Activated CD4-positive, alpha-beta memory T cell treated with anti-CD3 and anti-CD28 coated beads for 36 hours (primary cell): ENCODE measurements at regions of chr11 and their contacts with region 1.

Region 1: GRCh38 chr11:95231127-95231880 is at the start of gene SESN3:
- DNase-seq: peak; percentile 99
- H3K4me3 Mint-ChIP-seq: no peak within 1 kb of the TSS
- H3K27ac Mint-ChIP-seq: peak within 1 kb of the TSS; percentile 85
- H3K4me1 Mint-ChIP-seq: peaks cover 53% of the 10 kb centered on the region
- H3K27me3 Mint-ChIP-seq: no peaks in the 10 kb centered on the region
- total RNA-seq, gene SESN3: 13.9 to 15.5 TPM

Region 2: DNA sequence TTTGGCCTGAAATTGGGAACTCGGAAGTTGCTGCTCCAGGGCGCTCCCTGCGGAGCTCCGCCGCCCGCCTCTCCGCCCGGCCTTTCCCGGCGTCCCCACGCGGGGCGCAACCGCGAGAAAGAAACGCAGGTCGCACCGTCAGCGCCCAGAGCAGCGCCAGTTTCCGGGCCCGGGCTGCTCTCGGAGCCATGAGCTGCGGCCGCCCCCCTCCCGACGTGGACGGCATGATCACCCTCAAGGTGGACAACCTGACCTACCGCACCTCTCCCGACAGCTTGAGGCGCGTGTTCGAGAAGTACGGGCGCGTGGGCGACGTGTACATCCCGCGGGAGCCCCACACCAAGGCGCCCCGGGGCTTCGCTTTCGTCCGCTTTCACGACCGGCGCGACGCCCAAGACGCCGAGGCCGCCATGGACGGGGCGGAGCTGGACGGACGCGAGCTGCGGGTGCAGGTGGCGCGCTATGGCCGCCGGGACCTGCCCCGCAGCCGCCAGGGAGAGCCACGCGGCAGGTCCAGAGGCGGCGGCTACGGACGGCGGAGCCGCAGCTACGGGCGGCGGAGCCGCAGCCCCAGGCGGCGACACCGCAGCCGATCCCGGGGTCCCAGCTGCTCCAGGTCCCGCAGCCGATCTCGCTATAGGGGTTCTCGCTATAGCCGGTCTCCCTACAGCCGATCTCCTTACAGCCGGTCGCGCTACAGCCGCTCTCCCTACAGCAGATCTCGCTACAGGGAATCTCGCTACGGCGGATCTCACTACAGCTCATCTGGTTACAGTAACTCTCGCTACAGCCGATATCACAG is 164.1 kb before region 1 on chr11:
- CTCF ChIA-PET with region 1: interaction called, 9 read pairs
- POLR2A ChIA-PET with region 1: interaction called, 3 read pairs
- intact Hi-C with region 1: loop called (anchors 1 kb)
- DNase-seq: peak; percentile 85
- H3K4me3 Mint-ChIP-seq: peak overlapping the region; percentile 87
- H3K27ac Mint-ChIP-seq: peak overlapping the region; percentile 97
- H3K4me1 Mint-ChIP-seq: peaks cover 24% of the 10 kb centered on the region
- H3K27me3 Mint-ChIP-seq: no peaks in the 10 kb centered on the region

Region 3: DNA sequence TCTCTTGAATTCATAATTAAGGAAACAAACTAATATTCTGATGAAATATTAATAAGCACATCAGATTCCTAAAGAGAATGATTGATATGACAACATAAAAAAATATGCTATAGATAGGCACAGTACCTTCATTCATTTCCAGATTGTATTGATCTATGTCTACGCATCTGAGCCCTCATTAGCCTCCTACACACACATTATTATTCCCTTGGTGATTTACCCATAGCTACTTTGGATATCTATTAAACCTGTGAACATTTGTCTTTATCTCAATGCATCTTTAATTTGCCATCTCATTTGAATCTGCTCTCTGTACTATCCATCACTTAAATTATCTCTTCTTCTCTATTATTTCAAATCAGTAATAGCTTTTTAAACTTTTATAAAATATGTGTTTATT is 18.7 kb before region 1 on chr11:
- CTCF ChIA-PET with region 1: interaction called, 4 read pairs
- POLR2A ChIA-PET with region 1: interaction called, 3 read pairs
- intact Hi-C with region 1: loop called (anchors 2 kb)
- DNase-seq: no peak
- H3K4me3 Mint-ChIP-seq: no peak overlapping the region
- H3K27ac Mint-ChIP-seq: no peak overlapping the region
- H3K4me1 Mint-ChIP-seq: peaks cover 26% of the 10 kb centered on the region
- H3K27me3 Mint-ChIP-seq: no peaks in the 10 kb centered on the region

Region 4: DNA sequence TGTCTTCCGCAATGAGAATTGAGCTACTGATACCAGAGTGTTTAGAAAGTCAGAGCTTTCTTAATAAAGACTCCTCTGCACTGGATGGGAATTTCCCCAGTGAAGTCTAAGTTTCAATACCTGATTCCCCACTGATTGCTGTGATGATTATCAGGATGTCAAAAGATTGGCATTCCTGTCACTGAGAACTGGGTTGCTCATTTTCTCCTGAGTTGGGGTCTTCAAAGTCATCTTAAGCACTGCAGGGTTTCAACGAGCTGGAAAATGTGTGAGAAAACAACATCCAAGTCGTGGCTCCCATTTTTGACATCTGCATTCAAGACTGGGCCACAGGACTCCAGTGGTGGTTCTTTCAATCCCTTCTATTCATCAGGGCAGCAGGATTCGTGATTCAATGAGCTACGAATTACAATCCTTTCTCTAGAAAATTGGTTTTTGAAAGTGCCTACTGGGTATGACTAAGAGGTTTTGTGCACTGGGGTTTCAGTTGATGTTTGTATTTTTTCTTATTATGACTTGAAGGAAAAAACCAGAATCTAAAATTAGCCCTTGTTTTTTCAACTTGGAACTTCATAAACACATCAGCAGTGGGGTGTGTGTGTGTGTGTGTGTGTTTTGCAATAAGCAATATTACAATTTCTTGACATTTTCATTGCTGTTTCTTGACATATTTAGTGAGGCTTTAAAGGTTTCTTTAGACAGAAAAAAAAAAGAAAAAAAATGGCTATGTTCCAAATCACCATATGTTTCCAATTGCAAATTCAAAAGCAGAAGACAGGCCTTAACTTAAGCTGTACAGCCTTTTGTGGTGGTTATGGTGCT is 325.2 kb after region 1 on chr11:
- CTCF ChIA-PET with region 1: interaction called, 7 read pairs
- POLR2A ChIA-PET with region 1: interaction called, 8 read pairs
- intact Hi-C with region 1: loop called (anchors 1 kb)
- DNase-seq: peak; percentile 56
- H3K4me3 Mint-ChIP-seq: peak overlapping the region; percentile 38
- H3K27ac Mint-ChIP-seq: peak overlapping the region; percentile 90
- H3K4me1 Mint-ChIP-seq: peaks cover 27% of the 10 kb centered on the region
- H3K27me3 Mint-ChIP-seq: no peaks in the 10 kb centered on the region

Region 5: GRCh38 chr11:95764267-95764898 is 533.1 kb after region 1 on chr11:
- CTCF ChIA-PET with region 1: interaction called, 9 read pairs
- POLR2A ChIA-PET with region 1: interaction called, 3 read pairs
- intact Hi-C with region 1: loop called (anchors 5 kb)
- DNase-seq: no peak
- H3K4me3 Mint-ChIP-seq: no peak overlapping the region
- H3K27ac Mint-ChIP-seq: no peak overlapping the region
- H3K4me1 Mint-ChIP-seq: no peaks in the 10 kb centered on the region
- H3K27me3 Mint-ChIP-seq: no peaks in the 10 kb centered on the region